ENCODE measurements at regions of chr10 and their contacts with region 1.

Region 1: GRCh38 chr10:114499630-114500190 is 95.4 kb upstream of the AFAP1L2 start:
- DNase-seq: peak; percentile 70 to 71
- H3K4me3 ChIP-seq: no peak overlapping the region
- CTCF ChIP-seq: no peak
- POLR2A ChIP-seq: no peak

Region 2: DNA sequence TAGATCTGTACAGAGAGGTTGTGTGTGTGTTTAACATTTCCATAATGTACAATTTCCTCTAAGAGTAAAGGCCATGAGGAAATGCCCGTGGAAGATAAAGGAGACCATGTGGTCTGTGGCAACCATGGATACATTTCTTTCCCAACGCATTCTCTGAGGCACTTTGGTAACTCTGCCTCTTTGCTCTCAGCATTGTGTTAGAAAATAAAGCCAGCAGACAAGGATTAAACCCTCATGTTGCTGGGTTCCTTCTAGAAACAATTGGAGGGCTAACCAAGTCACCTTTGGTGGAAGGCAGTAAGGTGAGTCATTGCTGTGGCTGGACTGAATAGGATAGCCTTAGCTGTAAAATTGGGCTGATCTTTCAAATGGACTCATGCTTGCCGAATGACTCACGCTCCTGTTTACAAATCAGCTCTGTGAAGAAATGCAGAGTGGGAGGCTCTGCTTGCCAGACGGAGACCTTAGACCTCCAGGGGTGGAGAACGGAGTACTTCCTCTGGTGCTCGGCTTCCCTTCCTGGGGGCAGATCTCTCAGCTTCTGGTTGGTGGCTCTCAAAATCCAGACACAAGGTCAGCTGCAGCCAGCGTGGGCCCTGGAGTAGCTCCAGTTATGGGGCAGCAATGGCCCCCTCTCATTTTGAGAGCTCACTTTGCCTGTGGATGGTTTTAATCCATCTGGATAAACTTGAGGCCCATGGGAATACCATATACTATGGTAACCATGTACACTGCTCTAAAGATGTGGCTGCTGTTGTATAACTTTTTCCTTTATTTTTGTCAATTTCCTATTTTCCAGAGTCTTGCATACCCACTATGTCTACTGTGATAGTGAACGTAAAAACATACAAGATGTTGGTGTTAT is 1412.3 kb before region 1 on chr10:
- intact Hi-C with region 1: no loop called
- DNase-seq: peak; percentile 76 to 90
- H3K4me3 ChIP-seq: no peak overlapping the region
- CTCF ChIP-seq: no peak
- POLR2A ChIP-seq: no peak

Region 3: GRCh38 chr10:116044801-116045248 is 1545.1 kb after region 1 on chr10:
- intact Hi-C with region 1: loop called (anchors 5 kb)
- DNase-seq: peak in 1 of 2 donors; percentile 54
- H3K4me3 ChIP-seq: no peak overlapping the region
- CTCF ChIP-seq: no peak
- POLR2A ChIP-seq: no peak